ENCODE measurements at regions of chr1 and their contacts with region 1.

Region 1: GRCh38 chr1:23098463-23099170 is 70.0 kb downstream of the LUZP1 start:
- DNase-seq: peak in 8 of 10 donors; percentile 43 to 72 (median 52)
- H3K4me3 ChIP-seq: peak overlapping the region in 12 of 59 donors; percentile 7 to 32 (median 19)
- H3K27ac ChIP-seq: peak overlapping the region in 22 of 59 donors; percentile 3 to 69 (median 44)
- H3K27me3 ChIP-seq: no peaks in the 10 kb centered on the region
- CTCF ChIP-seq: peak; percentile 85 to 99 (median 96)

Region 2: GRCh38 chr1:23168457-23169194 is 70.0 kb after region 1 on chr1 and contains the start of gene LUZP1:
- intact Hi-C with region 1: loop called in 1 of 2 experiments (anchors 5 kb)
- DNase-seq: peak; percentile 86 to 97 (median 94)
- H3K4me3 ChIP-seq: peak within 1 kb of the TSS; percentile 62 to 92 (median 79)
- H3K27ac ChIP-seq: peak within 1 kb of the TSS in 58 of 59 donors; percentile 3 to 93 (median 82)
- H3K27me3 ChIP-seq: no peaks in the 10 kb centered on the region
- CTCF ChIP-seq: peak in 8 of 56 donors; percentile 7 to 33 (median 16)
- total RNA-seq, gene LUZP1: 23.0 to 108 (median 71.6) TPM

Region 3: GRCh38 chr1:23184212-23184934 is 85.8 kb after region 1 on chr1:
- intact Hi-C with region 1: loop called (anchors 1 kb)
- DNase-seq: peak in 1 of 10 donors; percentile 22
- H3K4me3 ChIP-seq: peak overlapping the region; percentile 4 to 69 (median 49)
- H3K27ac ChIP-seq: no peak overlapping the region
- H3K27me3 ChIP-seq: no peaks in the 10 kb centered on the region
- CTCF ChIP-seq: peak; percentile 77 to 98 (median 90)